ENCODE measurements at regions of chr5 and their contacts with region 1.

Region 1: DNA sequence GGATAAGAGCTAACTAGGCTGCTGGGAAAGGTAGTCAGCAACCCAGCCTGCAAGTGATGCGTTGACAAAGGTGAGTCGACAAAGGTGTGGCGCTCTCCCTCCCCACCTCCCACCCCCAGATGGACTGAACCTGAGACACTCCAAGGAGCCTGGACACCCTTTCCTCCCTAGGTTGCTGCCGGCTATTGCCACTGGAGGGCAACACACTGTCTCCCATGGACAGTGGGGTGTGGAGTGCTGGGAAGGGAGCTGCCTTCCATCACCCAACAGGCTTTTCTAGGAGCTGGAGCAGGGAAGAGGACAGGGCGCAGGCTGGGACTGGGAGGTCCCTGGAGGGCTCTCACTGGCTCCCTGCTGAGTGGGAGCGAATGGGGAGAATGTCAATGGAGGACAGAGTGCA is 75.4 kb upstream of the ARAP3 start:
- DNase-seq: peak; percentile 62
- H3K4me3 ChIP-seq: no peak overlapping the region
- H3K27ac ChIP-seq: no peak overlapping the region
- H3K4me1 ChIP-seq: no peaks in the 10 kb centered on the region
- H3K27me3 ChIP-seq: peaks cover 24% of the 10 kb centered on the region
- CTCF ChIP-seq: peak; percentile 42 to 70

Region 2: DNA sequence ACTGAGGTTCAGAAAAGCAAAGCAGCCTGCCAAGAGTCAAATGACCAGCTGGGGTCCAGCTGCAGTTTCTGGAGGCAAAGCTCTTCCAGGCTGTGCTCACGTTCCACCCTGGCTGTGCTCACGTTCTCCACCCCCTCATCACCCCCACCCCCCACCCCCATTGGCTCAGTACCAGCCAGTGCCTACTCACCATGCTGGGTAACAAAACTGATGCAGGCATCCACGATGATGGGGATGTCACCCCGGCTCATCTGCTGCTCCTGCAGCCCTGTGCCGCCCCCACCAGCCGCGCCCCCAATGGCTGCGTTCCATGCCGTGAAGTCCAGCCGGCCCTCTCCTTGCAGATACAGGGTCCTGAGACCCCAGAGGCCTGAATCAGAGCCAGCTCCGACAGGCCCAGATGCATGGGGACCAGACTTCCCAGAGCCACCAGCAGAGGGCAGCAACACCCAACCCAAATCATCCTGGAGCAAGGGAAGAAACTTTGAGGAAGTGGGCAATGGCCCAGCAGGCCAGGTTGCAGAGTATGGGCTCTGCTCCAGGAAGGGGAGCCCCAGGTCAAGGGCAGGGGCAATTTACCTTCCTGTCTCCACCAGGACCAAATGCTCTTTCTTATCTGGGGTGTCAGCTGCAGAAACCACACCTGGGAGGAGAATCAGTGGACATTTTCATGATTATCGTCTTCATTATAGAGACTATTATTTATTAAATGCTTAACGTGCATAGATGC is 92.5 kb before region 1 on chr5:
- CTCF ChIA-PET with region 1: no interaction called
- dilution Hi-C with region 1: no loop called
- in situ Hi-C with region 1: no loop called
- intact Hi-C with region 1: loop called (anchors 1 kb)
- DNase-seq: no peak
- H3K4me3 ChIP-seq: no peak overlapping the region
- H3K27ac ChIP-seq: no peak overlapping the region
- H3K4me1 ChIP-seq: no peaks in the 10 kb centered on the region
- H3K27me3 ChIP-seq: no peaks in the 10 kb centered on the region
- CTCF ChIP-seq: peak; percentile 84 to 91

Region 3: GRCh38 chr5:141734501-141735230 is 22.7 kb before region 1 on chr5:
- CTCF ChIA-PET with region 1: no interaction called
- dilution Hi-C with region 1: no loop called
- in situ Hi-C with region 1: no loop called
- intact Hi-C with region 1: loop called (anchors 1 kb)
- DNase-seq: peak; percentile 66
- H3K4me3 ChIP-seq: no peak overlapping the region
- H3K27ac ChIP-seq: no peak overlapping the region
- H3K4me1 ChIP-seq: no peaks in the 10 kb centered on the region
- H3K27me3 ChIP-seq: no peaks in the 10 kb centered on the region
- CTCF ChIP-seq: no peak

Region 4: GRCh38 chr5:141800617-141801016 is 43.2 kb after region 1 on chr5:
- CTCF ChIA-PET with region 1: no interaction called
- dilution Hi-C with region 1: no loop called
- in situ Hi-C with region 1: no loop called
- intact Hi-C with region 1: no loop called
- DNase-seq: no peak
- H3K4me3 ChIP-seq: no peak overlapping the region
- H3K27ac ChIP-seq: no peak overlapping the region
- H3K4me1 ChIP-seq: no peaks in the 10 kb centered on the region
- H3K27me3 ChIP-seq: no peaks in the 10 kb centered on the region
- CTCF ChIP-seq: no peak

Region 5: DNA sequence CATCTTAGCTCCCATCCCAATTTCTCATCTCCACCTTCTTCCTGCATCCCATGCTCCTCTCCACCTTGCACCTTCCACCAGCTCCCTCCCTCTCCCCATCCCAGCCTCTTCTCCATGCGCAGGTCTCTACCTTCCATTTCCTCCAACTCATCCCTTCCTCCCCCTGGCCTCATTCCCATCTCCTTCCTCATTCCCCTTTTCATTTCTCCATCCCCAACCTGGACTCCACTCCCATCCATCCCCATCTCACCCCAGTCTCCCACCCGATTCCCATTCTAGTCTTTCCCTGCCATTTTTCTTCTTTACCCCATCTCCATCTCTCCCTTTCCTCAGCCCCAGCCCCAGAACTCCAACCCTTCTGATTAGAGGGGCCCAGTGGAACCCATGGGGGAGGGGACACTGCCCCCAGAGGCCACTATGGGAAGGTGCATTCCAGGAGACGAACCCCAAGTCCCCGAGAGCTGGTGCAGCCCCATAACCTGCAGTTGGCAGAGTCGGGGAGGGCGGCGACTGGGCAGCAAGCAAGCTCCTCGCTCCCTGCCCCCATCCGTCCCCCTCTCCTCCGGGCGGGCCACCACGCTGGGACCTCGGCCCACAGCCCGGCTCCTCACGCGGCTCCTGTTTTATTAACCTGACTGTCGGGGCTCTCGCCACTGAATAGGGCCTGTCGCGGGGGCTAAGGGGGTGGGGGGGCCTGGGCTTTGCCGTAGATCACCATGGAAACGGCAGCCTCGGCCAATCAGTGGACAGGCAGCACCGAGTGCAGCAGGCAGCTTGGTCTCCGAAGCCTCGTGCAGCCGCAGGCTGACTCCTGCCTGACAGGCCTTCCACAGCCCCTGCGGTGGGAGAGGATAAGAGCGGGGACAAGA is 54.1 kb after region 1 on chr5:
- CTCF ChIA-PET with region 1: no interaction called
- dilution Hi-C with region 1: no loop called
- in situ Hi-C with region 1: no loop called
- intact Hi-C with region 1: loop called (anchors 1 kb)
- DNase-seq: no peak
- H3K4me3 ChIP-seq: no peak overlapping the region
- H3K27ac ChIP-seq: no peak overlapping the region
- H3K4me1 ChIP-seq: no peaks in the 10 kb centered on the region
- H3K27me3 ChIP-seq: no peaks in the 10 kb centered on the region
- CTCF ChIP-seq: peak; percentile 55 to 67

Region 6: DNA sequence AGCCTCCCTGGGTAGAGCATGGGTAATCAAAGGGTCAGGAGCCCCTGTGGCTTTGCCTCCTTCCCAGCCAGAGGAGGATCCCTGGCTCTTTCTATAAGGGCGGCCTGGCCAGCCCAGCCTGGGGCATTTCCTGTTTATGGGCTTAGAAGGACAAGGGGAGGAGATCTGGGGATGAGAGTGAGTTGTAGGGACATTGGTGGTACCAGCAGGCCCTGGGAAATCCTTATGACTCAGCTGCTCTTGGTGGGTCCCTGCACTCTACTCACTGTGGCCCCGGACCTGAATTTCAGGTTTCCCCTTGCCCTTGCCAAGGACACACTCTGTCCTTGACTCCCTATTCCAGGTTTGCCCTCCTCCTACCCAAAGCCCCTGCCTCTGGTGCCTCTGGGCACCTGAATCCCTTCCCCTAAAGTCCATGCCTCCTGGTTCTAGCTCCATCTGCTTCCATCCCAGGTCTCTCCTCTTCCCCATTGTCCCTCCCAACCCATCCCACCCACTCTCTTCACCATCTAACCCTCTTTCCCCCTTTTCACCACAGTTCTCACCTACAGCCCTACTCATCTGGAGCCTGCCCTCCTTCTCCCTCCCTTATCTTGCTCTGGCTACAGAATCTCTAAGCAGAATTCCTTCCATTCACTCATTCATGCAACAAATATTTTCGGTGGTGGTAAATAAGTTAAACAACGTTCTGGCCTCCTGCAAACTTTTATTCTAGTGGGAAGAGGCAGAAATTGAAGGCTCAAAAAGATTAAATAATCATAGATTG is 85.9 kb after region 1 on chr5:
- CTCF ChIA-PET with region 1: interaction called, 38 read pairs
- dilution Hi-C with region 1: loop called (anchors 5 kb)
- in situ Hi-C with region 1: no loop called
- intact Hi-C with region 1: no loop called
- DNase-seq: peak; percentile 20
- H3K4me3 ChIP-seq: no peak overlapping the region
- H3K27ac ChIP-seq: no peak overlapping the region
- H3K4me1 ChIP-seq: peaks cover 6% of the 10 kb centered on the region
- H3K27me3 ChIP-seq: no peaks in the 10 kb centered on the region
- CTCF ChIP-seq: no peak

Region 7: GRCh38 chr5:141960449-141961202 is 203.2 kb after region 1 on chr5:
- CTCF ChIA-PET with region 1: no interaction called
- dilution Hi-C with region 1: no loop called
- in situ Hi-C with region 1: no loop called
- intact Hi-C with region 1: loop called (anchors 5 kb)
- DNase-seq: peak; percentile 73
- H3K4me3 ChIP-seq: no peak overlapping the region
- H3K27ac ChIP-seq: no peak overlapping the region
- H3K4me1 ChIP-seq: peaks cover 3% of the 10 kb centered on the region
- H3K27me3 ChIP-seq: no peaks in the 10 kb centered on the region
- CTCF ChIP-seq: peak; percentile 82 to 83

Region 8: DNA sequence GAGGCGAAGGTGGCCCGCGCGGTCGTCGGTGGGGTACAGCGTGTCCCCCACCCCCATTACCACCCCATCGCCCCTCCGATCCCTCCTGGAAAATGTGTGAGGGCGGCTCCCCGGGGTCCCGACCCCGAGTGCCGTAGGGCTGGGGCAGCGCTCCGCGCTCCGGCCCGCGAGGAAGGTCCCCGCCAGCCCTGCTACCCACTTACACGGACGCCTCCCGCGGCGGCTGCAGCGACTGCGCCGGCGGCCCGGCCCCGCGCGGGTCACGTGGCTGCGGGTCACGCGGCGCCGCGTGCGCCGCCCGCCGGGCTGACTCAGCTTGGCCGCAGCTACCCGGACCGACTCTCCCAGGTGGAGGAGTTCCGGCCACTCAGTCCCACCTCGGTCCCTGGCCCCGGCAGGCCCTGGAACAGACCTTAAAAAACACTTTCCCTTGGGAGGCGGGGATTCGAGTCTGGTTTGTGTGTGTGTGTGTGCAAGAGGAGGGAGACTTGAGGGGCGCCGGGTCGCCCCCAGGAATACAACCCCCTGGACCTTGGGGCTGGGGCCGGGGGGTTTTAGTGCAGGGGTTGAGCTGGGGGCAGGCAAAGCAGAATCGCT is 255.5 kb after region 1 on chr5 and contains the start of gene GNPDA1:
- CTCF ChIA-PET with region 1: no interaction called
- dilution Hi-C with region 1: no loop called
- in situ Hi-C with region 1: no loop called
- intact Hi-C with region 1: no loop called
- DNase-seq: peak; percentile 71
- H3K4me3 ChIP-seq: peak within 1 kb of the TSS; percentile 69 to 84 (median 69)
- H3K27ac ChIP-seq: peak within 1 kb of the TSS; percentile 53
- H3K4me1 ChIP-seq: peaks cover 31% of the 10 kb centered on the region
- H3K27me3 ChIP-seq: no peaks in the 10 kb centered on the region
- CTCF ChIP-seq: no peak
- total RNA-seq, gene GNPDA1: 29.0 to 77.2 TPM

Region 9: DNA sequence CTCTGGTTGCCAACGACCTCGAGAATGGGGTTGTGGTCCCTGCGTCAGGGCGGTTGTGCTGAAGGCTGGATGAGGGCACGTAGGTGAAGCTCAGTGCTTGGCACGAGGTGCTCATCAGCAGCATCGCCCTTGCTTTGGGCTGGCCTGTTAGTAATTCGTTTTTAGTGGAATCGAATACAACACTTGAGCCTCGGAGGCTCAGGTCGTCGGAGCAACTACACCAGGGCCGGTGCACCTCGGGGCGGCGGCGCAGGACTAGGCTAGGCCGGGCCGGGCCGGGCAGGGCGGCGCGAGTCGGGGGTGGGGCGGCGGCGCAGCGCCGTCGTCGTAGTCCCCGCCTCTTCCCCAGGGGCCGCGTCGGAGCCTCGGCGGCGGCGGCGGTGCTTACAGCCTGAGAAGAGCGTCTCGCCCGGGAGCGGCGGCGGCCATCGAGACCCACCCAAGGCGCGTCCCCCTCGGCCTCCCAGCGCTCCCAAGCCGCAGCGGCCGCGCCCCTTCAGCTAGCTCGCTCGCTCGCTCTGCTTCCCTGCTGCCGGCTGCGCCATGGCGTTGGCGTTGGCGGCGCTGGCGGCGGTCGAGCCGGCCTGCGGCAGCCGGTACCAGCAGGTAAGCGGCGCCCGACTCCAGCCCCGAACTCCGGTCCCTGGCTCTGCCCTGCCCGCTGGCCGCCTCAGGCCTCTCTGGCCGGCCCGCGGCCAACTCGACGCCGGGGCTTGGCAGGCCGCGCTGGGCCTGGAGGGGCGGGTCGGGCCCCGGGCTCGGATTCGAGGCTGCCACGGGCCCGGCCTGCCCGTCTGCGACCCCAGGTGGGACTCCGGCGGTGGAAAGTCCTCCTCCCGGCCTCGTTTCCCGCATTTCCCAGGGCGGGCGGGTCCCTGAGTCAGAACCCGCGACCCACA is 351.3 kb after region 1 on chr5 and contains the start of gene NDFIP1:
- CTCF ChIA-PET with region 1: no interaction called
- dilution Hi-C with region 1: no loop called
- in situ Hi-C with region 1: no loop called
- intact Hi-C with region 1: no loop called
- DNase-seq: peak; percentile 83
- H3K4me3 ChIP-seq: peak within 1 kb of the TSS; percentile 74 to 84 (median 78)
- H3K27ac ChIP-seq: peak within 1 kb of the TSS; percentile 80
- H3K4me1 ChIP-seq: peaks cover 14% of the 10 kb centered on the region
- H3K27me3 ChIP-seq: no peaks in the 10 kb centered on the region
- CTCF ChIP-seq: no peak
- total RNA-seq, gene NDFIP1: 40.4 to 120 TPM